Activated T-helper 1 cell treated with anti-CD3 and anti-CD28 coated beads, Interleukin-12 subunit alpha, Interleukin-12 subunit beta, Interleukin-2, Interleukin-4 antibody, amounts not matched to agents 30 ng/mL and 10 ng/mL and 1 ng/mL, durations not matched to agents 14 hours and 24 hours and 36 hours (primary cell): ENCODE measurements at regions of chr14 and their contacts with region 1.

Region 1: DNA sequence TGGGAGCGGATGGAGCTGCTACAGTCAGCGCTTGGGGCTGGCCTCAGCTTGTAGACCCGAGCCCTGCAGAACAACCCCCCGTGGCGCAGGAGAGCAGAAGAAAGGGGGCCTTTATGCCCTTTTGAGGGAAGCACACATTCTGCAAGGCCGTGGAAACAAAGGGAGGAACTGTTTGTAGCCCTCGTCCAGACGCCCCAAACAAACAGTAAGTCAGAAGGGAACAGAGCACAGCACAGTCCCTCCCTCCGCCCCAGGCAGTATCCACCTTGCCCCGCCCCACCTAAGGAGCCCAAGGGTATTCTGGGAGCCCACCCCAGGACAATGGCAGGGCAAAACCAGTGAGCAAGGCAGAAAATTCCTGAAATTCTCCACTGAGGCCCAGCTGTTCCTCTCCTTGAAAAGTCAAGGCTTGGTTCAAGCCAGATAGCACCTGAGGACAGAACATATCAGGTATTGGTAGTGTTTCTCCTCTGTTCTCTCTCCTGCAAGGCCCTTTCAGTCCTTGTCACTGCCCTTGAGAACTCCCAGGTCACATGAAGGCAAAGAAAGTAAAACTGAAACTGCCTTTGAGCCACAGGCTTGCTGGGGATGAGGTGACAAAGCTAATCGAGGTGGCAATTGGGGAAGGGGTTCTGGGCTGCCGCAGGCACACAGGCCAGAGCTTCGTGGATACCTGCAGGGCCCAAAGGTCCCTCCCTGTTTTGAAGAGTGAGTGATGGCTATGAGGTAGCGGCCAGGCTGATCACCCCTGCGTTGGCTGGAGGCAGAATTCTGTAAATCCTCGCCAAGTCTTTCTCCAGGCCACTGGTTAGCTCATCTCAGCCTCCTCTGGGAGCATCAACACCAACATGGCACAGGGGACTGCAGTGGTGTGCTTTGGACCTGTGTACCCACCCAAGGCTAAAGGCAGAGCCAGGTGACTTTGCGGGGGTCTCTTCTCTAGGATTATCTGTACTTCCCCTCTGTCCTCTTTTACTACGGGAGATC is 499 bp downstream of the DGLUCY start:
- DNase-seq: peak; percentile 74
- H3K4me3 Mint-ChIP-seq: peak overlapping the region; percentile 95
- H3K27ac Mint-ChIP-seq: peak overlapping the region; percentile 94
- H3K4me1 Mint-ChIP-seq: peaks cover 81% of the 10 kb centered on the region
- H3K27me3 Mint-ChIP-seq: no peaks in the 10 kb centered on the region

Region 2: DNA sequence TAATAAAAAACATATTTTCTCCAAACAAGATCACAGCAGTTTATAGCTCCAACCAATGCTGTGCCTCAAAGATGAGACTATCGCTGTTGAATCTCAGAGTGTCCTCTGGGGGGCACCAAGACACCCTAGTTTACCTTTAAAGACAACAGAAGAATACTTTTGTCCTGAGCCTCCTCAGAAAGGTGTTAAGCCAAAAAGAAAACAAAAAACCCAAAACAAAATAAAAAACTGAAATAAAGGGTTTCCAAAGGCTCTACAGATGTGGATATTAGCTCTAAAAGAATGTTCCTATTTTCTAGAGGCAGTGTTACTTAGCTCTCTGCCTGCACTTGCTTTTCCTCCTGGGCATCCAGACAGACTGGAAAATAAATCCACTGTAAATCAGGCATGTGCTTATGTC is 211.3 kb before region 1 on chr14:
- intact Hi-C with region 1: loop called (anchors 1 kb)
- DNase-seq: peak; percentile 33
- H3K4me3 Mint-ChIP-seq: no peak overlapping the region
- H3K27ac Mint-ChIP-seq: no peak overlapping the region
- H3K4me1 Mint-ChIP-seq: peaks cover 35% of the 10 kb centered on the region
- H3K27me3 Mint-ChIP-seq: no peaks in the 10 kb centered on the region

Region 3: DNA sequence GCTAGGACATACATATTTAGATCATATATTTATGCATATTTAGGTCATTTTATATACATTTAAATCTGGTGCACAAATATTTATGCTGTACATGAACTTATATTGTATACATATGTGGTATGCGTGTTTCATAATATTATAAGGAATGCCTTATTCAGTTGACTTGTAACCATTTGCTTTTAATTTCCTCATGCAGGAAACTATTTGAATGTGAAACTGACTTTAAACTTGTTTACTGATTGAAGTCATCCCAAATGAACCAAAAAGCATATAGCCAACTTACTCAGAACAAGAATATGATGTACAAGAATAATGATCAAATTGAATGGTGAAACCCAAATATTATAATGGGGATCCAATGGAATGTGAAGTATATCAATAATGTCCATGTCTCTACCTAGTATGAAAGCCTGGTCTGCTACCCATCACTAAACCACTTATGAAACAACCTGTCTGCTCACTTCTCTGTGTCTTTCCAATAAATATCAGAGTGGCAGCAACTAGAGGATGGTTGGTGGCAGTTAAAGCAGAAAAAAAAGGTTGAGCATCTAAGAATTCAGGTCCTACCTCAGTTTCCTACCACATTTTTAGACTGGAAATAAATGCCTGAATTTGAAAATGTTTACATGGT is 92.3 kb before region 1 on chr14:
- intact Hi-C with region 1: loop called (anchors 1 kb)
- DNase-seq: no peak
- H3K4me3 Mint-ChIP-seq: peak overlapping the region; percentile 76
- H3K27ac Mint-ChIP-seq: peak overlapping the region; percentile 94
- H3K4me1 Mint-ChIP-seq: peaks cover 83% of the 10 kb centered on the region
- H3K27me3 Mint-ChIP-seq: no peaks in the 10 kb centered on the region

Region 4: GRCh38 chr14:91038438-91038837 is 75.9 kb before region 1 on chr14:
- intact Hi-C with region 1: loop called (anchors 2 kb)
- DNase-seq: no peak
- H3K4me3 Mint-ChIP-seq: no peak overlapping the region
- H3K27ac Mint-ChIP-seq: no peak overlapping the region
- H3K4me1 Mint-ChIP-seq: peaks cover 73% of the 10 kb centered on the region
- H3K27me3 Mint-ChIP-seq: no peaks in the 10 kb centered on the region

Region 5: GRCh38 chr14:91078095-91078737 is 36.2 kb before region 1 on chr14:
- intact Hi-C with region 1: loop called (anchors 1 kb)
- DNase-seq: peak; percentile 68
- H3K4me3 Mint-ChIP-seq: peak overlapping the region; percentile 51
- H3K27ac Mint-ChIP-seq: peak overlapping the region; percentile 85
- H3K4me1 Mint-ChIP-seq: peaks cover 63% of the 10 kb centered on the region
- H3K27me3 Mint-ChIP-seq: peaks cover 6% of the 10 kb centered on the region

Region 6: DNA sequence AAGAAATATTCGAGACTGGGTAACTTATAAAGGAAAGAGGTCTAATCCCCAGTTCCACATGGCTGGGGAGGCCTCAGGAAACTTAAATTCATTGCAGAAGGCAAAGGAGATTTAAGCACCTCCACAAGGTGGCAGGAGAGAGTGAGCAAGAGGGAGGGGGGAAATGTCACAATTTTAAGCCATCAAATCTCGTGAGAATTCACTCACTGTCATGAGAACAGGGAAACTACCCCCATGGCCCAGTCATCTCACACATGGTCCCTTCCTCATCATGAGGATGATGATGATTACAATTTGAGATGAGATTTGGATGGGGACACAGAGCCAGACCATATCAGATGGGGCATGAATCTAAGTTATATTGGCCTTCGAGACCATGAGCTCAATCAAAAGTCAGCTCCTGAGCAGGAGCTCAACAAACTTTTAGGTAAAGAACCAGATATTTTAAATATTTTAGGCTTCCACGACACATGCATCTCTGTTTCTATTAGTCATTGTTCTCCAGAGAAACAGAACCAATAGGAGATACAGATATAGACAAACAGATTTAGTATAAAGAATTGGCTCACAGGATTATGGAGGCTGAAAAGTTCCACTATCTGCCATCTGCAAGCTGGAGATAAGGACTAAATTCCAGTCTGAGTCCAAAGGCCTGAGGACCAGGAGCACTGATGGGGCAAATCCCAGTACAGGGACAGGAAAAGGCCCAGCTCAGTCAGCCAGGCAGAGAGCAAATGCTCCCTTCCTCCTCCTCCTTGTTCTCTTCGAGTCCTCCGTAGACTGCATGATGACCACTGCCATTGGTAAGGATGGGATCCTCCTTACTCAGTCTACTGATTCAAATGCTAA is 24.4 kb after region 1 on chr14:
- intact Hi-C with region 1: loop called (anchors 2 kb)
- DNase-seq: peak; percentile 42
- H3K4me3 Mint-ChIP-seq: no peak overlapping the region
- H3K27ac Mint-ChIP-seq: peak overlapping the region; percentile 61
- H3K4me1 Mint-ChIP-seq: peaks cover 57% of the 10 kb centered on the region
- H3K27me3 Mint-ChIP-seq: no peaks in the 10 kb centered on the region

Region 7: DNA sequence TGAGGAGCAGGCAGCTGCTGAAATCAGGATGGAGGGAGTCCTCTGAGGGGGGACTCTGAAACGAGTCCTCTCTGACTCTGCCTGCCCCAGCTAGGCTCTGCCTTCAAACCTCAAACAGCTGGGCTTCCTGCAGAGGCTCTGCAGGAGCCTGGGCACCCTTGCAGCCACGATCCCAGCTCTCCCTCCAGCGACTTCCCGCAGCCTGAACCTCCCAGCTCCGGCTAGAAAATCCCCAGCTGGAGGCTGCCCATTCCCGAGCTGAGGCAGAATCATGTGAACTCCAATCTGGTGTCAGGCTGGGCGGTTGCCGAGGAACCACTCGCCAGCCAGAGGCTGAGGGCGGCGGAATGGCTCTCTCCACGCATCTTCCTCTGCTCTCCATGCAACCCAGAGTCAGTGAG is 130.1 kb after region 1 on chr14 and contains the start of gene GPR68:
- intact Hi-C with region 1: loop called (anchors 1 kb)
- DNase-seq: no peak
- H3K4me3 Mint-ChIP-seq: peak within 1 kb of the TSS; percentile 85
- H3K27ac Mint-ChIP-seq: peak within 1 kb of the TSS; percentile 88
- H3K4me1 Mint-ChIP-seq: peaks cover 89% of the 10 kb centered on the region
- H3K27me3 Mint-ChIP-seq: no peaks in the 10 kb centered on the region
- total RNA-seq, gene GPR68: 4.5 and 5.4 TPM in 2 replicates